Activated CD8-positive, alpha-beta T cell treated with anti-CD3 and anti-CD28 coated beads for 36 hours (primary cell): ENCODE measurements at regions of chr21 and their contacts with region 1.

Region 1: GRCh38 chr21:43938751-43939442 is 73.2 kb upstream of the TRAPPC10 start:
- DNase-seq: peak; percentile 94
- ATAC-seq: peak; percentile 99
- H3K4me3 Mint-ChIP-seq: peak overlapping the region; percentile 80
- H3K27ac Mint-ChIP-seq: peak overlapping the region; percentile 86
- H3K4me1 Mint-ChIP-seq: peaks cover 18% of the 10 kb centered on the region
- H3K27me3 Mint-ChIP-seq: no peaks in the 10 kb centered on the region
- CTCF ChIP-seq: peak; percentile 100

Region 2: DNA sequence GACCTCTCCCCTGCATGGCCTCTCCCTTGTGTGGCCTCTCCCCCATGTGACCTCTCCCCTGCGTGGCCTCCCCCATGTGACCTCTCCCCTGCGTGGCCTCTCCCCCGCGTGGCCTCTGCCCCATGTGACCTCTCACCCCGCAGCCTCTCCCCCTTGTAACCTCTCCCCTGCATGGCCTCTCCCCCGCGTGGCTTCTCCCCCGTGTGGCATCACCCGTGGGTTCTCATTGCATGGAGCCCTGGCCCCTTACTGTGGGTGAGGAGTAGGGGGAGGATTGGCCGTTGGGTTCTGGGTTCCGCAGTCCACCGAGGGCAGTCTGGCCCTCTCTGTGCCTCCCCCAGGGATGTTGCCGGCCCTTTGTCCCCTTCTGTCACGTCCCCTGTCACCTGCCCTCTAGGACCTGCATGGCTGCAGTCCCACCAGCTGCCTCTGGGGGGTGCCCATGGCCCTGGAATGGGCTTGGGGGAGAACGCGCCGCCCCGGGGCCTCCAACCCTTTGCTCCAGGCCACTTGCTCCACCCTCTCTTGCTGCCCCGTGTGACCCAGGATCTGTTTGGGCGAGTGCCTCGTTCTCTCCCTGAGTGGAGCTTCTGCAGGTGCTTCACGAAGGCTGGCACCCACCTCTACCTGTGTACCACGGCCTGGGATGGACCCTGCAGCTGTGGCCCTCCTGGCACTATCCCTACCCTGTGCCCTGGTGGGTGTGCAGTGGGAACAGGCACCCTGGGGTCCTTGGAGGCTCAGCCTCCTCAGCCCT is 128.2 kb before region 1 on chr21:
- CTCF ChIA-PET with region 1: interaction called, 36 read pairs
- POLR2A ChIA-PET with region 1: interaction called, 3 read pairs
- intact Hi-C with region 1: loop called (anchors 10 kb)
- DNase-seq: peak; percentile 95
- ATAC-seq: peak; percentile 99
- H3K4me3 Mint-ChIP-seq: no peak overlapping the region
- H3K27ac Mint-ChIP-seq: no peak overlapping the region
- H3K4me1 Mint-ChIP-seq: peaks cover 7% of the 10 kb centered on the region
- H3K27me3 Mint-ChIP-seq: no peaks in the 10 kb centered on the region
- CTCF ChIP-seq: peak; percentile 92

Region 3: GRCh38 chr21:43854773-43855633 is 83.9 kb before region 1 on chr21:
- CTCF ChIA-PET with region 1: no interaction called
- POLR2A ChIA-PET with region 1: no interaction called
- intact Hi-C with region 1: no loop called
- DNase-seq: peak; percentile 85
- ATAC-seq: peak; percentile 99
- H3K4me3 Mint-ChIP-seq: peak overlapping the region; percentile 38
- H3K27ac Mint-ChIP-seq: peak overlapping the region; percentile 67
- H3K4me1 Mint-ChIP-seq: peaks cover 22% of the 10 kb centered on the region
- H3K27me3 Mint-ChIP-seq: peaks cover 5% of the 10 kb centered on the region
- CTCF ChIP-seq: no peak

Region 4: GRCh38 chr21:43866260-43866629 is 72.7 kb before region 1 on chr21:
- CTCF ChIA-PET with region 1: interaction called, 9 read pairs
- POLR2A ChIA-PET with region 1: interaction called, 4 read pairs
- intact Hi-C with region 1: loop called (anchors 2 kb)
- DNase-seq: peak; percentile 77
- ATAC-seq: peak; percentile 52
- H3K4me3 Mint-ChIP-seq: peak overlapping the region; percentile 77
- H3K27ac Mint-ChIP-seq: peak overlapping the region; percentile 92
- H3K4me1 Mint-ChIP-seq: peaks cover 45% of the 10 kb centered on the region
- H3K27me3 Mint-ChIP-seq: no peaks in the 10 kb centered on the region
- CTCF ChIP-seq: no peak

Region 5: DNA sequence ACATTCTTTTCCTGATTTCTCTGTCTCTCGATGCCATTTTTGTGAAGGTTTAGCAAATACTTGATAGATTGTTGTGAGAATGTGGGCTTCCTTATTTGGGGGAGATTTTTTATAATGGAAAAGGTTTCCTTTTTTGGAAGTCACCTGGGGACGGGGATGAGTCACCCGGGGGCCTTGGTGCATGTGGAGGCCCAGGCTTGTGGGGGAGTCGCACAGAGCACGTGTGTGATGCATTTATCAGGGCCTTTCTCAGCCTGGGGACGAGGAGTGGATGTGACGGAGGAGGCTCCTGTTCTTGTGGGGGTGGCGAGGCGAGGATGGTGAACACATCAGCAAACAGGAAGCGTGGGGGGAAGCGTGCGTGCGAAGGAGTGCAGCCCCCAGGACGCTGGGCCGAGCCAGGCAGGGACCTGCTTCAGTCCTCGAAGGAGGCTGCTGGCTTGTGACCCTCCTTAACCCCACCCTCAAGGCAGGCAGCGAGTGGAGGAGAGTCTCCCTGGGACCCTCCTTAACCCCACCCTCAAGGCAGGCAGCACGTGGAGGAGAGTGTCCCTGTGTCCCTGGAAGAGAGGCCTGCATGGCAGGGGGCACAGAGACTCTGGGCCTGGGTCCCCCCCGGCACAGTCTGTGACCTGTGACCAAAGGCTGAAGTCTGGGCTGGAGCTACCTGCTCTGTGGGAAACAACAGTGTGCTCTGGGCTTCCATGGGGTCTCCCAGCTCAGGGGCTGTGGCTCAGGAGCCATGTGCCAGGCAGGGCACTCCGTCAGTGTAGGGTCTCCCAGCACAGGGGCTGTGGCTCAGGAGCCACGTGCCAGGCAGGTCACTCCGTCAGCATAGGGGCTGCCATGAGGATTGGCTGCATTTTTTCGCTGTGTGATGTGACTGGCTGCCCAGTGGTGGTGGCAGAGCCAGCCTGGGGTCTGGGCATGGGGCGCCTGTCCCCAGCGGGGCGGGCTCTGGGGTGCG is 16.6 kb before region 1 on chr21:
- CTCF ChIA-PET with region 1: interaction called, 32 read pairs
- POLR2A ChIA-PET with region 1: interaction called, 7 read pairs
- intact Hi-C with region 1: no loop called
- DNase-seq: peak; percentile 92
- ATAC-seq: peak; percentile 78
- H3K4me3 Mint-ChIP-seq: peak overlapping the region; percentile 53
- H3K27ac Mint-ChIP-seq: peak overlapping the region; percentile 95
- H3K4me1 Mint-ChIP-seq: peaks cover 54% of the 10 kb centered on the region
- H3K27me3 Mint-ChIP-seq: peaks cover 2% of the 10 kb centered on the region
- CTCF ChIP-seq: no peak

Region 6: GRCh38 chr21:43975495-43975993 is 36.6 kb after region 1 on chr21:
- CTCF ChIA-PET with region 1: interaction called, 25 read pairs
- POLR2A ChIA-PET with region 1: no interaction called
- intact Hi-C with region 1: no loop called
- DNase-seq: peak; percentile 91
- ATAC-seq: peak; percentile 98
- H3K4me3 Mint-ChIP-seq: no peak overlapping the region
- H3K27ac Mint-ChIP-seq: no peak overlapping the region
- H3K4me1 Mint-ChIP-seq: peaks cover 6% of the 10 kb centered on the region
- H3K27me3 Mint-ChIP-seq: no peaks in the 10 kb centered on the region
- CTCF ChIP-seq: peak; percentile 90